WTC11 (cell line): ENCODE measurements at regions of chr12 and their contacts with region 1.

Region 1: DNA sequence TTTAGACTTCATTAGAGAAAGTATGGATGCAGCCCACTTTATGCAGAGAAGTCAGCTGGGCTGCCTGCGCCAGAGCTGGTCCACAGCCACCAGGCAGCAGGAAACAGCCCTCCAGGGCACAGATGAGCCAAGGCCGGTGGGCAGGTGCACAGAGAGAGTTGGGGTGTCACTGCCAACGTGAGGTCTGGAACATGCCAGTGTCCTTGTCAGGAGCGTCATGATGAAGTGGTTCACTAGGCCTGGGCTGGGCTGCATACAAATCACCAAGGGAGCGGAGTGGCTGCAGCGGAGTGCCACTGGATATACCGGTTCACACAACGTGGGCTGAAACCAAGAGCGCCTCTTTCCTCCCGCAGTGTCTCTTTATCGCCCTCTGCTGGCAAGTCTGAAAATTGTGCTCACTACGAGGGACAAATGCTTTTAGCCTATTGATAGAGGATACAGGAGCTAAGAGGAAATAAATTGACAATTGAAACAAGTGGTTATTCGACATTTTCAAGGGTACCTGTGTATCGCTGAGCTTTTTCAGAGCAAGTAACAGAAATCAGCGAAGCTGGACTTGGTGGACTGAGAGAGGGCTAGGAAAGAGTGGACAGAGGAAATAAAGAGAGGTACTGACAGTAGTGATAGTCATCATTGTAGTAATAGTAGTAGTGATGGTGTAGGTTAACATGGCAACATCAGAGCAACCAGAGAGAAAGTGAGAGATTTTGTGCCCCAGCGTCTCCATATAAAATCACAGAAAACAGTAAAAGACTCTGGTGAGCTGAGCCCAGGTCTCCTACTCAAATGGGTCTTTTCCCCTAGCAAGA is 52.0 kb upstream of the ITPR2 start:
- DNase-seq: peak; percentile 85
- ATAC-seq: peak; percentile 95
- H3K4me3 Mint-ChIP-seq: no peak overlapping the region
- H3K27ac Mint-ChIP-seq: no peak overlapping the region
- H3K4me1 Mint-ChIP-seq: no peaks in the 10 kb centered on the region
- H3K27me3 Mint-ChIP-seq: peaks cover 6% of the 10 kb centered on the region; the same call in 1 of the 2 replicates
- CTCF ChIP-seq: peak; percentile 95

Region 2: GRCh38 chr12:26701604-26702215 is 183.3 kb before region 1 on chr12:
- CTCF ChIA-PET with region 1: interaction called, 13 read pairs
- POLR2A ChIA-PET with region 1: no interaction called
- DNase-seq: no peak
- ATAC-seq: peak; percentile 46
- H3K4me3 Mint-ChIP-seq: no peak overlapping the region
- H3K27ac Mint-ChIP-seq: no peak overlapping the region
- H3K4me1 Mint-ChIP-seq: peaks cover 30% of the 10 kb centered on the region
- H3K27me3 Mint-ChIP-seq: no peaks in the 10 kb centered on the region
- CTCF ChIP-seq: peak; percentile 42

Region 3: GRCh38 chr12:26760657-26761293 is 124.2 kb before region 1 on chr12:
- CTCF ChIA-PET with region 1: no interaction called
- POLR2A ChIA-PET with region 1: no interaction called
- DNase-seq: no peak
- ATAC-seq: no peak
- H3K4me3 Mint-ChIP-seq: no peak overlapping the region
- H3K27ac Mint-ChIP-seq: no peak overlapping the region
- H3K4me1 Mint-ChIP-seq: no peaks in the 10 kb centered on the region
- H3K27me3 Mint-ChIP-seq: no peaks in the 10 kb centered on the region
- CTCF ChIP-seq: no peak

Region 4: DNA sequence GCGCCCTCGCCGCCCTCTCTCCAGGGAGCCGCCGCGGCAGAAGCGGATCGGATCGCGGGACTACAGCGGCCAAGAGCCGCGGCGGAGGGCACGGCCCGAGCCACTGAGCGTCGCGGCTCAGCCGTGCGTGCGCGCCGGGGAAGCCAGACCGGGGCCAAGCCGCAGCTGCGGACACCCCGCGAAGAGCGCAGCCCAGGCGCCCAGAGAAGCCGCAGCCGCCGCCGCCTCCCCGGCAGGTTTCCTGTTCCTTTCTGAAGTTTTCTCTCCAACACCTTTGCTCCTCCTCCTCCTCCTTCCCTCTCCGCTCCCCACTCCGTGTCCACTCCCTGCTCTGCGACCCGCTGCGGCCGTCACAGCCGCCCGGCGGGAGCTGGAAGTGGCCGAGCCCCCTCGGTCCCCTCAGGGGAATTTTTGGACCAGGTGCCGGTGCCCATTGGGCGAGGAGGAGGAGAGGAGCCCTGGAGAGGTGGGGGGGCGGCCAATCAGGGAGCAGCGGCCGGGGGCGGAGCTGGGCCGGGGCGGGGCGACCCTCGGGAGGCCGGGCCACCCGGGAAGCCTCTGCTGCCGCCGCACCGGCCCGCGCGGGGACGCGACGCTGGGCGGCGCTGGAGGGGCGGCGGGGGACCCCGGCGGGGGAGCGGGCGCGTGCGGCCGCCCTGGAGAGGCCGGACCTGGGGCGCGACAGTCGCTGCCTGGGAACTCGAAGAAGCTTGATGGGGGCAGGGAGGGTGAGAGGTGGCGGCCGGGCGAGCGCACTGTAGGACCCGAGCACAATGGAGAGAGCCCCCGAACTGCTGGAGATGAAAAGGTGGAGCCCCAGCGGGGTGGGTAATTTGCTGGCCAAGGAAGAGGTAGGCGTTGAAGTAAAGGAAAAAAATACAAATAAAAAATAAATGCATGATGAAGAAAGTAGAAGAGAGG is 51.9 kb before region 1 on chr12 and contains the start of gene ITPR2:
- CTCF ChIA-PET with region 1: interaction called, 24 read pairs
- POLR2A ChIA-PET with region 1: no interaction called
- DNase-seq: peak; percentile 93
- ATAC-seq: peak; percentile 88
- H3K4me3 Mint-ChIP-seq: peak within 1 kb of the TSS; percentile 91
- H3K27ac Mint-ChIP-seq: peak within 1 kb of the TSS; percentile 90
- H3K4me1 Mint-ChIP-seq: peaks cover 37% of the 10 kb centered on the region
- H3K27me3 Mint-ChIP-seq: no peaks in the 10 kb centered on the region; the same call in 1 of the 2 replicates
- CTCF ChIP-seq: no peak
- total RNA-seq, gene ITPR2: 32.2 to 50.7 TPM (median 34.2 TPM) in 3 replicates

Region 5: DNA sequence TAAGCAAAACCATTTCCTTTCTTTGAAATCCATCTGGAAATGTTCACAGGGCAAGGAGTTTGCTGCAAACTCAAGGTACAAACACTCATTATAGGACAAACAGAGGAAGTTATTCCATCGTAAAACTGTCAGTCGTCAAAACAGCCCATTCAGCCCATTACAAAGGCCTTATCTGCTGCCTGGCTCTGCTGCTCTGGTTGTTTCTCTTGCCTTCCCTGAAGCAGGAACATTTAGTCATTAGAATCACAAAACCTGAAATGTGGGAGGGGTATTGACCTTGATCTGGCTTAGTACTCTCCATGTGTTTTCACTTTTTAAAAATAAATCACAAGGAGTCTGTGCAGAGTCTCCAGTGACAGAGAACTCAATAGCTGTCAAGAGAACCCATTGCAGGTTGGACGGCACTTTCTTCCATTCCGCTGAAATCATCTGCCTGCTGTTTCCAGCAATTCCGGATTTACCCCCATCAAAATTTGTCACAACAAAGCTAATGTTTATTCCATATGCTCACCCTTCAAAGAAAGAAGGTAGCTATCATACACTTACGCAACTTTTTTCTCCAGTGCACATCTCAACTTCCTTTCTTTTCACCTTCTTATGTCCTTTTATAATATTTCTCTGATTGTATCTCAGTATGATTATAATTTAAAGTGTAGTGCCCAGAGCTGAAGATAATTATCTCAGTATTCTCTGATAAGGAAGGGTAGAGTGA is 27.4 kb before region 1 on chr12:
- CTCF ChIA-PET with region 1: interaction called, 13 read pairs
- POLR2A ChIA-PET with region 1: no interaction called
- DNase-seq: no peak
- ATAC-seq: peak; percentile 72
- H3K4me3 Mint-ChIP-seq: no peak overlapping the region
- H3K27ac Mint-ChIP-seq: no peak overlapping the region
- H3K4me1 Mint-ChIP-seq: peaks cover 2% of the 10 kb centered on the region; the same call in 1 of the 2 replicates
- H3K27me3 Mint-ChIP-seq: no peaks in the 10 kb centered on the region
- CTCF ChIP-seq: no peak

Region 6: DNA sequence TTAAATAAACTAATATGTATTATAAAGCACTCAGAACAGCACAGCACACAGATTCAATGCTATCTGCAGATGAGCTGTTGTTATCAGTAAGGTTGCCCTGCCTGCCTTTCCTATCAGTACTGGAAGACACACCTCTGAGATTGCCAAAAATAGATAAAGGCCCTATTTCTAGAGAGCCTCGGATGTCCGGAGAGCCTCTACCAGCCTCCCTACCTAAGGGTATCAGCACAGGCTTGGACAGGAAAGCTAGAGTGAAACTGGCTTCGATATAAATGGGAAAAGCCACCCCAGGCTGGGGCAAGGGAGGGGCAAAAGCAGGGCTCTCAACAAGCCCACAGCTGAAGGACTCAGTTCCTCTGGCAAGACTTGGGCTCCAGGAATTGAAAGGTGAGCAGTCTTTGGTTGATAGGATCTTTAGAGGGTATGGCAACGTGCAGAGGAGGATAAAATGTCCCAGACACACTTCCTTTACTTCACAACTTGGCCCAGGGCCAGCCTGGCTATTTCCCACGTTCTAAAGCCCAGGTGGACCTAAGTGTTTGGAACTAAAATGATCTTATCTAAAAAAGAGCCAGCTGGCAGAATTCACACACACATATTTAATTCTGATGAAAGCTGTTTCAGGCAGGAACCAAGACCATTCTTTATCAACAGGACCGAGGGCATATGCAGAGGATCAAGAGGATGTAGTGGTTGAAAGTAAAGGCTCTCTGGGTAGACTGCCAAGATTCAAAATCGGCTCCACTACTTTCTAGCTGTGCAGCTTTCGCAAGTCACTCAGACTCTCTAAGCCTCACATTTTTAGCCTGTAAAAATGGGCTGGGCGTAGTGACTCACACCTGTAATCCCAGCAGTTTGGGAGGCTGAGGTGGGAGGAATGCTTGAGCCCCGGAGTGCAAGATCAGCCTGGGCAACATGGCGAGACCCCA is 14.2 kb before region 1 on chr12:
- CTCF ChIA-PET with region 1: interaction called, 21 read pairs
- POLR2A ChIA-PET with region 1: interaction called, 3 read pairs
- DNase-seq: no peak
- ATAC-seq: no peak
- H3K4me3 Mint-ChIP-seq: no peak overlapping the region
- H3K27ac Mint-ChIP-seq: no peak overlapping the region
- H3K4me1 Mint-ChIP-seq: no peaks in the 10 kb centered on the region
- H3K27me3 Mint-ChIP-seq: no peaks in the 10 kb centered on the region
- CTCF ChIP-seq: no peak

Region 7: DNA sequence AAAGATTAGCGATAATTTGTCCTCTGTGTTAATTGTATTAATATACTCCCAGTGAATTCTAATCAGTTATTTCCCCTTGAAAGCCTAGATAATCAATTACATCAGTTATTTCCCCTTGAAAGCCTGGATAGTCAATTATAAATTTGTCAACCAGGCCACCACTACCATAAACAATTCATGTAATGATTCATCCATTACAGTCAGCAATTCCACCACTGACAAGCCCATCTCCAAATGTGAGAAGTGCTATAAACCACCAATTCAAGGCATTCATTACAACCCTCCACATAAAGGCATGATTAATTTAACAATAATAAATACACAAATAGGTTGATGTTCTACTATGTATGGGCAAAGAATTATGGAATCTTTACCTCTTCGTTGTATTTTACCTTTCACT is 11.9 kb after region 1 on chr12:
- CTCF ChIA-PET with region 1: interaction called, 12 read pairs
- POLR2A ChIA-PET with region 1: no interaction called
- DNase-seq: no peak
- ATAC-seq: no peak
- H3K4me3 Mint-ChIP-seq: no peak overlapping the region
- H3K27ac Mint-ChIP-seq: no peak overlapping the region
- H3K4me1 Mint-ChIP-seq: no peaks in the 10 kb centered on the region
- H3K27me3 Mint-ChIP-seq: no peaks in the 10 kb centered on the region
- CTCF ChIP-seq: no peak

Region 8: DNA sequence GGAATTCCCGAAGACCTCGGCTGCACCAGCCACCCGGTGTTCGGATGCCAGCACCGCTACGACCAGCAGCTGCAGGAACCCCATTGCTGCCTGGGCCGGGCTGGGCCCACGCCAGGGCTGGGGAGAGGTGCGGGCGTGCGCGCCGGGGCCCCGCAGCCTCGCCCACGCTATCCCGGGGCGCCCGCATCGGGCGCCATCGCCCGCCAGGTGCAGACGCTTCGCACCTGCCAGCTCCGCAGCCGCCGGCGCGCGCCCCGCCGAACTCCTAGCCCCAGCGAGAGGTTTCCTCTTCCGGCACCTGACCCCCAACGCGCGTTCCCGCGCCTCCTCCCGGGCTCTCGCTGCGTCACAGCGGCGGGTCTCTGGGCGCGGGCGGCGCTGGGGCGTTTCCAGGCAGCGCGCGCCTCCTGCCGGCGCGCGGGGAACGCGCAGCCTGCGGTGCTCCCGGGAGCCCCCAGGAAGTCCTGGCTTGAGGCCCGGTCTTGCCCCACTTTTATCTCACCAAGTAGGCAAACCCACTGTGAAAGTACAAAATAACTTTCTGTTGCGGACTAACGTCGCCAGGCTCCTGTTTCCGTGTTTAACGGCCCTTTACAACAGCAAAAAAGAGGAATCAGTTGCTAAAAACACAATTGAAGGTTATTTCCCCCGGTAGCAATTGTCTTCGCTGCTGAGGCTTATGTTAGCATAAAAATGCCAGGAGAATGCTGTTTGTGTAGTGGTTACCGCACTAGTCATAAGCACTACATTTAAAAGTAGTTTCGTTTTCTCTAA is 129.3 kb after region 1 on chr12 and contains the start of gene TM7SF3:
- CTCF ChIA-PET with region 1: interaction called, 14 read pairs
- POLR2A ChIA-PET with region 1: no interaction called
- DNase-seq: peak; percentile 95
- ATAC-seq: peak; percentile 90
- H3K4me3 Mint-ChIP-seq: peak within 1 kb of the TSS; percentile 92
- H3K27ac Mint-ChIP-seq: peak within 1 kb of the TSS; percentile 88
- H3K4me1 Mint-ChIP-seq: peaks cover 45% of the 10 kb centered on the region
- H3K27me3 Mint-ChIP-seq: no peaks in the 10 kb centered on the region
- CTCF ChIP-seq: peak; percentile 77
- total RNA-seq, gene TM7SF3: 75.3 to 80.9 TPM (median 75.7 TPM) in 3 replicates